ENCODE measurements at regions of chr7 and their contacts with region 1.

Region 1: GRCh38 chr7:11427686-11428273 is 404.2 kb downstream of the THSD7A start:
- DNase-seq: peak; percentile 13 to 53 (median 38)
- H3K4me3 ChIP-seq: no peak overlapping the region
- H3K4me3 Mint-ChIP-seq: no peak overlapping the region
- H3K27ac ChIP-seq: no peak overlapping the region
- H3K27ac Mint-ChIP-seq: no peak overlapping the region
- H3K4me1 ChIP-seq: peaks cover 18 to 20% of the 10 kb centered on the region in 2 donors
- H3K4me1 Mint-ChIP-seq: peaks cover 20% of the 10 kb centered on the region
- H3K27me3 ChIP-seq: no peaks in the 10 kb centered on the region
- H3K27me3 Mint-ChIP-seq: no peaks in the 10 kb centered on the region
- CTCF ChIP-seq: peak; percentile 81

Region 2: DNA sequence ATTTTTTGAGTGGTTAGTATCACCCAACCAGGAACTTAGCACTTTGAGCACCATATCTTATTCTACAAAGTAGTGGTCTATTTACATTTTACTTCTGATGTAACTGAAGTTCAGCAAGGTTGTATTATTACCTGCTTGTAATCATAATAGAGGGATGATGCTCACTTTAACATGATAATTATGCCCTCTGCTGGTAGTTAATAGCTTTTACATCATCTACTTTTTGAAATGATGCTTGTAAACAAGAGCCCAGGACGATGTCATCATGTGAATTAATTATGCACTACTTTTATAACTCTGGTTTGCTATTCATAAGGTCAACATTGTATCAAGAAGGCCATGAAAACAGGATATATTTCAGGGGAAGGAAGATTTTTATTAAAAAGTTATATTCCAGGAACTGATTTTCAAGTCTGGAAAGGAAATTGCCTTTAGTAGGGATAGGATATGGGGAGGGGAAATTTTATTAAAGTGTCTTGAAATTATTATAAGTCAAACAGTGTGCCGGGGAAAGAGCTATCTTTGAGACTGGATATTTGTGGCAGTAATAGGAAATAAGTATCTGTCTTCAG is 1062.4 kb after region 1 on chr7:
- intact Hi-C with region 1: loop called in 1 of 2 experiments (anchors 10 kb)
- DNase-seq: peak in 1 of 3 donors; percentile 2
- H3K4me3 ChIP-seq: no peak overlapping the region
- H3K4me3 Mint-ChIP-seq: no peak overlapping the region
- H3K27ac ChIP-seq: no peak overlapping the region
- H3K27ac Mint-ChIP-seq: no peak overlapping the region
- H3K4me1 ChIP-seq: no peaks in the 10 kb centered on the region
- H3K4me1 Mint-ChIP-seq: no peaks in the 10 kb centered on the region
- H3K27me3 ChIP-seq: no peaks in the 10 kb centered on the region
- H3K27me3 Mint-ChIP-seq: peaks cover 0 to 2% (median 0%) of the 10 kb centered on the region in 3 donors
- CTCF ChIP-seq: peak; percentile 64